ENCODE measurements at regions of chr13 and their contacts with region 1.

Region 1: GRCh38 chr13:98549006-98549727 is 27.7 kb downstream of the STK24 start:
- DNase-seq: peak; percentile 88
- H3K4me3 ChIP-seq: no peak overlapping the region
- H3K27ac ChIP-seq: peak overlapping the region; percentile 83
- H3K27me3 ChIP-seq: no peaks in the 10 kb centered on the region
- CTCF ChIP-seq: no peak

Region 2: GRCh38 chr13:97855570-97856303 is 693.4 kb before region 1 on chr13:
- CTCF ChIA-PET with region 1: interaction called, 13 read pairs
- POLR2A ChIA-PET with region 1: no interaction called
- DNase-seq: peak; percentile 66
- H3K4me3 ChIP-seq: no peak overlapping the region
- H3K27ac ChIP-seq: no peak overlapping the region
- H3K27me3 ChIP-seq: peaks cover 4% of the 10 kb centered on the region
- CTCF ChIP-seq: peak; percentile 83

Region 3: DNA sequence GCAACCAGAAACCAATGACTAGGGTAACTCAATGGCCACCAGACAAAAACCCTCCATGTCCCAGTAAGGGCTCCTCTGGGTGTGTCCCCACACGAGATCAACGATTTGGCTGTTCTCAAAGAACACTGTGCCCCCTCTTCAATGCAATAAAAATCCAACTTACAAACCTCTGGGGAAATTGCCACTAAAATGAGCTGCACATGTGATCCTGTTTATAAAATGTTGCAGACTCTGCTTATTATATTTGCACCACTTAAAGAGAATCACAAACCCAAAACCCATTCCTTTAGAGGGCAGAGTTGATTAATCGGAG is 52.7 kb before region 1 on chr13:
- CTCF ChIA-PET with region 1: no interaction called
- POLR2A ChIA-PET with region 1: interaction called, 11 read pairs
- DNase-seq: no peak
- H3K4me3 ChIP-seq: no peak overlapping the region
- H3K27ac ChIP-seq: peak overlapping the region; percentile 35
- H3K27me3 ChIP-seq: no peaks in the 10 kb centered on the region
- CTCF ChIP-seq: no peak

Region 4: DNA sequence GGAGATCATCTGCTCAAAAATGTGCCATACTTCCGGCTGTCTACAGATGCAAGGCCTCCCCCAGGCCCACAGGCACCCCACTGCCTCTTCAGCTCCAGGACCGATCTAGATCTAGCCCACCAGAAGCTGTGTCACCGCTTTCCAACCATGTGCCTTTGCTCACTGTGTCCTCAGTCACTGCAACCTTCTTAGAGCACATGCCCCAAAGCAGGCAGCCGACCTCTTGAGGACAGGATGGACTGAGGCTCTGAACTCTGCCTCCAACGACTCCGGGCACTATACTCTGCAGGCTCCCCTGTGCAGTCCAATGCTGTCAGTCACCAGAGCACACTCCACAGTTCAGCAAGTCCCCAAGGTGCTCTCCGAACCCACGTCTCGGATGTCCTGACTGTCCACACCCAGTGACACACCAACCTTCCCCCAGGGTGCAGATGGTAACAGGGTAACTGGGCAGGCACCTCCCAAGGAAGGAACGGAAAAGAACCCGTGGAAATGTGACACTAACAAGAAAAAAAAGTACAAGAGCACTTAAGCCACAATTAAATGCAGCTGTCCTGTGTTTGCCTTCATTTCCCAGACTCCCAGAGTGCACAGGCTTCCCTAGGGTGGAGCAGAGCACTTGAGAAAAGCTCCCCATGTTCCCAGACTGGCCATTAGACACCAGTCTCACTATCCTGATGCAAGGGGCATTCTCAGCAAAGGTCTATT is 22.9 kb after region 1 on chr13:
- CTCF ChIA-PET with region 1: no interaction called
- POLR2A ChIA-PET with region 1: interaction called, 11 read pairs
- DNase-seq: no peak
- H3K4me3 ChIP-seq: no peak overlapping the region
- H3K27ac ChIP-seq: no peak overlapping the region
- H3K27me3 ChIP-seq: no peaks in the 10 kb centered on the region
- CTCF ChIP-seq: no peak